ENCODE measurements at regions of chr14 and their contacts with region 1.

Region 1: DNA sequence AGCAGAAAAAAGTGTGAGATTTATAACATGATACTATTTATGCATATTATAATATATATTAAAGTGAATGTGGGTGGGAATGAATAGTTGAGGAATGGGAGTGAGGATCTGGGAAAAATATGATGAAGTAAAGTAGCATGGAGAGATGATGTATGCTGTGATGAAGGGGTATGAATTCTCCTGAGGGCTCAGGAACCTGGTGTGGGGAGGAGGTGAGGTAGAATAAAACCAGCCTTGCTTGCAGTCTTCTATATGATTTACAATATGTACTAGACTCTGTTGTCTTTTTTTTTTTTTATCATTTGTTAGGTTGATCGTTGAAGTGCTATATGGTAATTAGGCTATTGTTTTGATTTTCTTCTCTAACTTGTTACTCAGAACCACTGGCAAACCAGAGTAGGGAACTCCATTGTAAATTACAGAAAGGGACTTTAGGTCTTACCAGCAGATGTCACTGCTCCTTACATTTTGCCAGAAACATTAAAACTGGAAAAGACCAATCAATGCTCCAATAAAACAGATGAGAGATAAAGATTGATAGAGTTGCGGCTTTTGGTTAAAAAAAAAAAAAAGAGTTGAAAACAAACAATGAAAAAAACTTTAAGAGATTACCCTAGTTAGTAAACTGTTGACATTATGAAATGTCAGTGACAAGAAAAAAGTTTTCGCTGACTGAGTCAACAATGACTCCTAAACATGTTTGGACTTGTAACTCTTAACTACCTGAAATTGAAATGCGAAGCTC is 39.9 kb downstream of the ATL1 start:
- DNase-seq: no peak
- ATAC-seq: peak in 1 of 4 donors; percentile 57
- H3K4me3 ChIP-seq: no peak overlapping the region
- H3K27ac ChIP-seq: no peak overlapping the region
- H3K4me1 ChIP-seq: no peaks in the 10 kb centered on the region
- H3K27me3 ChIP-seq: no peaks in the 10 kb centered on the region
- CTCF ChIP-seq: peak; percentile 41 to 74 (median 56)
- POLR2A ChIP-seq: no peak

Region 2: DNA sequence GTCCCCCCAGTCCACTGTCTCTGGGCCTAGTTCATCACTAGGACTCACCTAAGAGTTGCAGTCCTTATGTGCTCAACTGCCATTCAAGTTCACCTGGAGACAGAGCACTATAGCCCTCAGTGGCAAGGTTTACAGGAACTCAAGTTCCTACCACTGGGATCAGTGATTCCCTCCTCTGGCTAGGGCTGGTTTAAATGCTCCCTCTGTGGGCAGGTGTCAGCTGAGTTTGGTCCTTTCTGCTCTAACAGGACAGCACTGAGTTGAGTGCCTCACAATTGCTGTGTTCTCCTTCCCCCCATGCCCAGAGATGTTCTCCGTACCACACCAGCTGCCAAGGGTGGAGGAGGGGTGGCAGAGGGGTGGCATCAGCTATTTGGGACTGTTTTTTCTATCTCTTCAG is 89.0 kb after region 1 on chr14:
- intact Hi-C with region 1: loop called in 1 of 10 experiments (anchors 5 kb)
- DNase-seq: no peak
- ATAC-seq: no peak
- H3K4me3 ChIP-seq: no peak overlapping the region
- H3K27ac ChIP-seq: no peak overlapping the region
- H3K4me1 ChIP-seq: no peaks in the 10 kb centered on the region
- H3K27me3 ChIP-seq: no peaks in the 10 kb centered on the region
- CTCF ChIP-seq: peak in 3 of 12 donors; percentile 11 to 28 (median 12)
- POLR2A ChIP-seq: no peak

Region 3: DNA sequence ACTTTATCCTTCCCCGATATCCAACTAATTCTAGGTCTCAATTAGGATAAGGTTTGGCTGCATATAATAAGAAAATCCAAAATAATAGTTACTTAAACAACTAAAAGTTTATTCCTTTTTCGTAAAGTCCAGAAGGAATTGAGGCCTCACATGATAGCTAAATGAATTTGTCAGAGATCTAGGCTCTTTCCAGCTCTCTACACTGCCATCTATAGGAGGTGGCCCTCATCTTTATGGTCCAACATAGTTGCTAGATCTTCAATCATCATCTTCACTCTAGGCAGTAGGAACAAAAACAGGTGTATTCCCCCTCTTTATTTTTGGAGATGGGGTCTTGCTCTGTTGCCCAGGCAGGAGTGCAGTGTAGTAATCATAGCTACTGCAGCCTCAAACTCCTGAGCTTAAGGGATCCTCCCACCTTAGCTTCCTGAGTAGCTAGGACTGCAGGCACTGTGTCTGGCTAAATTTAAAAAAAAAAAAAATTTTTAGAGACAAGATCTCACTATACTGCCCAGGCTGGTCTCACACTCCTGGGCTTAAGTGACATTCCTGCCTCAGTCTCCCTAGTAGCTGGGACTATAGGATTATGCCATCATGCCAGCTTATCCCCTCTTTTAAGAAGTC is 114.7 kb after region 1 on chr14:
- intact Hi-C with region 1: loop called in 4 of 10 experiments (anchors 2 to 5 kb)
- DNase-seq: peak in 1 of 5 donors; percentile 16
- ATAC-seq: peak in 3 of 4 donors; percentile 28 to 77 (median 69)
- H3K4me3 ChIP-seq: no peak overlapping the region
- H3K27ac ChIP-seq: no peak overlapping the region
- H3K4me1 ChIP-seq: no peaks in the 10 kb centered on the region
- H3K27me3 ChIP-seq: no peaks in the 10 kb centered on the region
- CTCF ChIP-seq: peak; percentile 39 to 79 (median 60)
- POLR2A ChIP-seq: no peak

Region 4: GRCh38 chr14:50766338-50766886 is 166.5 kb after region 1 on chr14:
- intact Hi-C with region 1: loop called in 1 of 10 experiments (anchors 5 kb)
- DNase-seq: no peak
- ATAC-seq: peak; percentile 51 to 85 (median 78)
- H3K4me3 ChIP-seq: no peak overlapping the region
- H3K27ac ChIP-seq: peak overlapping the region in 7 of 12 donors; percentile 17 to 58 (median 28)
- H3K4me1 ChIP-seq: peaks cover 0 to 22% (median 3%) of the 10 kb centered on the region in 12 donors
- H3K27me3 ChIP-seq: no peaks in the 10 kb centered on the region
- CTCF ChIP-seq: no peak
- POLR2A ChIP-seq: no peak

Region 5: GRCh38 chr14:50773632-50774541 is 174.0 kb after region 1 on chr14:
- intact Hi-C with region 1: loop called (anchors 1 to 5 kb)
- DNase-seq: peak in 1 of 5 donors; percentile 25
- ATAC-seq: peak in 3 of 4 donors; percentile 37 to 70 (median 55)
- H3K4me3 ChIP-seq: no peak overlapping the region
- H3K27ac ChIP-seq: no peak overlapping the region
- H3K4me1 ChIP-seq: peaks cover 0 to 31% (median 18%) of the 10 kb centered on the region in 12 donors
- H3K27me3 ChIP-seq: no peaks in the 10 kb centered on the region
- CTCF ChIP-seq: peak; percentile 45 to 74 (median 64)
- POLR2A ChIP-seq: no peak

Region 6: GRCh38 chr14:50778721-50779483 is 179.0 kb after region 1 on chr14:
- intact Hi-C with region 1: loop called in 9 of 10 experiments (anchors 1 to 5 kb)
- DNase-seq: no peak
- ATAC-seq: no peak
- H3K4me3 ChIP-seq: no peak overlapping the region
- H3K27ac ChIP-seq: peak overlapping the region in 1 of 12 donors; percentile 12
- H3K4me1 ChIP-seq: peaks cover 0 to 47% (median 19%) of the 10 kb centered on the region in 12 donors
- H3K27me3 ChIP-seq: no peaks in the 10 kb centered on the region
- CTCF ChIP-seq: no peak
- POLR2A ChIP-seq: no peak

Region 7: GRCh38 chr14:50860478-50861086 is 260.7 kb after region 1 on chr14:
- intact Hi-C with region 1: loop called in 8 of 10 experiments (anchors 5 to 10 kb)
- DNase-seq: peak; percentile 64 to 78 (median 77)
- ATAC-seq: peak; percentile 57 to 82 (median 70)
- H3K4me3 ChIP-seq: peak overlapping the region; percentile 12 to 73 (median 56)
- H3K27ac ChIP-seq: peak overlapping the region in 9 of 12 donors; percentile 8 to 86 (median 63)
- H3K4me1 ChIP-seq: peaks cover 0 to 14% (median 6%) of the 10 kb centered on the region in 12 donors
- H3K27me3 ChIP-seq: no peaks in the 10 kb centered on the region
- CTCF ChIP-seq: peak; percentile 66 to 86 (median 79)
- POLR2A ChIP-seq: no peak